ENCODE measurements at regions of chr4 and their contacts with region 1.

Region 1: GRCh38 chr4:53113431-53114225 is 251.5 kb downstream of the RASL11B start:
- DNase-seq: no peak
- H3K4me3 Mint-ChIP-seq: no peak overlapping the region
- H3K27ac Mint-ChIP-seq: peak overlapping the region; percentile 92
- H3K4me1 Mint-ChIP-seq: peaks cover 20% of the 10 kb centered on the region
- H3K27me3 Mint-ChIP-seq: no peaks in the 10 kb centered on the region

Region 2: GRCh38 chr4:51831133-51831532 is 1282.5 kb before region 1 on chr4:
- intact Hi-C with region 1: no loop called
- DNase-seq: peak; percentile 88
- H3K4me3 Mint-ChIP-seq: no peak overlapping the region
- H3K27ac Mint-ChIP-seq: no peak overlapping the region
- H3K4me1 Mint-ChIP-seq: peaks cover 1% of the 10 kb centered on the region
- H3K27me3 Mint-ChIP-seq: peaks cover 16% of the 10 kb centered on the region

Region 3: GRCh38 chr4:53015681-53016080 is 97.9 kb before region 1 on chr4:
- intact Hi-C with region 1: loop called (anchors 5 kb)
- DNase-seq: no peak
- H3K4me3 Mint-ChIP-seq: no peak overlapping the region
- H3K27ac Mint-ChIP-seq: peak overlapping the region; percentile 21
- H3K4me1 Mint-ChIP-seq: peaks cover 25% of the 10 kb centered on the region
- H3K27me3 Mint-ChIP-seq: no peaks in the 10 kb centered on the region

Region 4: DNA sequence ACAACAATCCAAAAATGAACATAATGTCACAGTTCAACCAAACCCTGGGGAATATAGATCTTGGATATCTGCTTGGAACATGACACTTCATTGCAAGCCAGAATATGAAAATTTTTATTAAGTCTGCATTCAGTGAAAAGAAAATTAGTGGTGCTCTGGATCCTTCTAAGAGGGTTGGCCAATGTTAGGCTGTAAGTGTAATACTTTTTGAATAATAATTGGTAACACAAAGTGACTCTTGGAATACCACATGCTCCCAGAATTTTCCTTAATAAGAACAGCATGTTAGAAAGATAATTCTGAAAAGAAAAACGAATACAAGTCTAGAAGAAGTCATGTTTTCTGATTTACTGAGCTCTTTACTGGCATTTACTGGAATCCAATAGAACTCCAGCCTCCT is 75.7 kb before region 1 on chr4:
- intact Hi-C with region 1: loop called (anchors 1 kb)
- DNase-seq: no peak
- H3K4me3 Mint-ChIP-seq: no peak overlapping the region
- H3K27ac Mint-ChIP-seq: no peak overlapping the region
- H3K4me1 Mint-ChIP-seq: peaks cover 13% of the 10 kb centered on the region
- H3K27me3 Mint-ChIP-seq: no peaks in the 10 kb centered on the region

Region 5: GRCh38 chr4:53075162-53075785 is 38.4 kb before region 1 on chr4:
- intact Hi-C with region 1: loop called (anchors 1 kb)
- DNase-seq: no peak
- H3K4me3 Mint-ChIP-seq: peak overlapping the region; percentile 56
- H3K27ac Mint-ChIP-seq: peak overlapping the region; percentile 82
- H3K4me1 Mint-ChIP-seq: peaks cover 8% of the 10 kb centered on the region
- H3K27me3 Mint-ChIP-seq: no peaks in the 10 kb centered on the region

Region 6: GRCh38 chr4:53088152-53088551 is 25.5 kb before region 1 on chr4:
- intact Hi-C with region 1: no loop called
- DNase-seq: no peak
- H3K4me3 Mint-ChIP-seq: no peak overlapping the region
- H3K27ac Mint-ChIP-seq: no peak overlapping the region
- H3K4me1 Mint-ChIP-seq: no peaks in the 10 kb centered on the region
- H3K27me3 Mint-ChIP-seq: no peaks in the 10 kb centered on the region

Region 7: DNA sequence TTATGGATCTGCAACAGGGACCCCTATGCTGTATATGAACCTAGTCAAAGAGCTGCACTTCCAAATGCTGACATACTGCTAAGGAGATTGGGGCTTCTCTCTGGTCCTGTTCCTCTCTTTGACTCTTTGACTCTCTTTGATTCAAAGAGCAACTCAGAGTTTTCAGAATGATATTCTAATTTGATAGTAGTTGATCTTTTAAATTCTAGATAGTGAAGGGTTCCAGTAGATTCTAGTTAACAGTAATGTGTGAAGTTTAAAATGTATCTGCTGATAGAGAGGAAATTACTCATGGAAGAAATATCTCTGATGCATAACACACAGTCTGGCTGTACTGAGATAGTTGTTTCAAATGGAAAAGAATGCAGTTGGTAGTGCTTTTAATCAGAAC is 12.4 kb before region 1 on chr4:
- intact Hi-C with region 1: loop called (anchors 1 kb)
- DNase-seq: no peak
- H3K4me3 Mint-ChIP-seq: no peak overlapping the region
- H3K27ac Mint-ChIP-seq: peak overlapping the region; percentile 70
- H3K4me1 Mint-ChIP-seq: peaks cover 11% of the 10 kb centered on the region
- H3K27me3 Mint-ChIP-seq: no peaks in the 10 kb centered on the region

Region 8: DNA sequence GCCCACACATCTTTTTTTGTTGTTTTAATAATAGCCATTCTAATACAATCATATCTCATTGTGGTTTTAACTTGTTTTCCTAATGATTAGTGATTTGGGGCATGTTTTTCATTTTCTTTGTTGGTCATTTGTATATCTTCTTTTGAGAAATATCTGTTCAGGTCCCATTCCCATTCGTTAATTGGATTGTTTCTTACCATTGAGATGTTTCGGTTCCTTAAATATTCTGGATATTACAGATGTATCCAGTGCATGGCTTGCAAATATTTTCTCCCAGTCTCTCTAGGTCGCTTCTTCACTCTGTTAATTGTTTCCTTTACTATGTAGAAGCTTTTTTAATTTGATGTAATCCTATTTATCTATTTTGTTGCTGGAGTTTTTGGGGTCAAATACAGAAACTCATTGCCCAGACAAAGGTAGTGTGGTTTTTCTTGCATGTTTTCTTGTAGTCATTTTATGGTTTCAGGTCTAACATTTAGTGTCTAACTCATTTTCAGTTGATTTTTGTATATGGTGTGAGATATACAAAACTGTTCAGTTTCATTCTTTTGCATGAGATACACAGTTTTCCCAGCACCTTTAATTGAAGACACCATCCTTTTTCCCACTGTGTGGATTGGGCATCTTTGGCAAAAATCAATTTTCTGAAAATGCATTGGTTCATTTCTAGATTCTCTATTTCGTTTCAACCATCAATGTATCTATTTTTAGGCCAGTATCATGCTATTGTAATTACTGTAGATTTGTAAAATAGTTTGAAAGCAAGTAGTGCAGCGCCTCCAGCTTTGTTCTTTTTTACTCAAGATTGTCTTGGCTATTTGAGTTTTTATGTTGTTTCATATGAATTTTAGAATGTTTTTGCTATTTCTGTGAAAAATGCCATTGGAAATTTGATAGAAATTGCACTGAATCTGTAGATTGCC is 56.3 kb after region 1 on chr4:
- intact Hi-C with region 1: no loop called
- DNase-seq: no peak
- H3K4me3 Mint-ChIP-seq: no peak overlapping the region
- H3K27ac Mint-ChIP-seq: no peak overlapping the region
- H3K4me1 Mint-ChIP-seq: peaks cover 3% of the 10 kb centered on the region
- H3K27me3 Mint-ChIP-seq: no peaks in the 10 kb centered on the region

Measured in activated CD4-positive, alpha-beta T cell treated with anti-CD3 and anti-CD28 coated beads, Interleukin-2, amount 10 ng/mL, durations not matched to agents 24 days and 14 days (primary cell).